ENCODE measurements at regions of chr2 and their contacts with region 1.

Region 1: GRCh38 chr2:44535376-44535775 is 173.6 kb downstream of the CAMKMT start:
- DNase-seq: no peak
- H3K4me3 Mint-ChIP-seq: no peak overlapping the region
- H3K27ac Mint-ChIP-seq: no peak overlapping the region
- H3K4me1 Mint-ChIP-seq: peaks cover 2% of the 10 kb centered on the region
- H3K27me3 Mint-ChIP-seq: no peaks in the 10 kb centered on the region

Region 2: GRCh38 chr2:44362207-44363015 is 173.0 kb before region 1 on chr2:
- CTCF ChIA-PET with region 1: no interaction called
- intact Hi-C with region 1: no loop called
- DNase-seq: peak; percentile 46
- H3K4me3 Mint-ChIP-seq: peak overlapping the region; percentile 97
- H3K27ac Mint-ChIP-seq: peak overlapping the region; percentile 99
- H3K4me1 Mint-ChIP-seq: peaks cover 41% of the 10 kb centered on the region
- H3K27me3 Mint-ChIP-seq: no peaks in the 10 kb centered on the region

Region 3: DNA sequence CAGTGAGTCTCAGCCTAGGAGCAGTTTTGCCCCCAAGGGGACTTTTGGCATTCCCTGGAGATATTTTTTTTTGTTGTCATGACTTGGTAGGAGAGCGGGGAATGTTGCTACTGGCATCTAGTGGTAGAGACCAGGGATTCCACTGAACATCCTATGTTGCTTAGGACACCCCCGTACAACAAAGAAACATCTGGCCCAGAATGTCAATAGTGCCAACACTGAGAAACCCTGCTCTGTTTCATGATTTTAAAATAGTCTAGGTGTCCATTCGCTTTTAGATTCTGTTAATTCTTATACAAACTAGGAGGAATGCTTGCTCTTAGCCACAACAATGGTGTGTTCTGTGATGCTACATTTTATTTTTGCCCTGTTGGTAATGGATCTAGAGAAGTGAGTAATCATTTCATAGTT is 180.3 kb after region 1 on chr2:
- CTCF ChIA-PET with region 1: interaction called, 10 read pairs
- intact Hi-C with region 1: no loop called
- DNase-seq: no peak
- H3K4me3 Mint-ChIP-seq: no peak overlapping the region
- H3K27ac Mint-ChIP-seq: no peak overlapping the region
- H3K4me1 Mint-ChIP-seq: no peaks in the 10 kb centered on the region
- H3K27me3 Mint-ChIP-seq: no peaks in the 10 kb centered on the region

Region 4: DNA sequence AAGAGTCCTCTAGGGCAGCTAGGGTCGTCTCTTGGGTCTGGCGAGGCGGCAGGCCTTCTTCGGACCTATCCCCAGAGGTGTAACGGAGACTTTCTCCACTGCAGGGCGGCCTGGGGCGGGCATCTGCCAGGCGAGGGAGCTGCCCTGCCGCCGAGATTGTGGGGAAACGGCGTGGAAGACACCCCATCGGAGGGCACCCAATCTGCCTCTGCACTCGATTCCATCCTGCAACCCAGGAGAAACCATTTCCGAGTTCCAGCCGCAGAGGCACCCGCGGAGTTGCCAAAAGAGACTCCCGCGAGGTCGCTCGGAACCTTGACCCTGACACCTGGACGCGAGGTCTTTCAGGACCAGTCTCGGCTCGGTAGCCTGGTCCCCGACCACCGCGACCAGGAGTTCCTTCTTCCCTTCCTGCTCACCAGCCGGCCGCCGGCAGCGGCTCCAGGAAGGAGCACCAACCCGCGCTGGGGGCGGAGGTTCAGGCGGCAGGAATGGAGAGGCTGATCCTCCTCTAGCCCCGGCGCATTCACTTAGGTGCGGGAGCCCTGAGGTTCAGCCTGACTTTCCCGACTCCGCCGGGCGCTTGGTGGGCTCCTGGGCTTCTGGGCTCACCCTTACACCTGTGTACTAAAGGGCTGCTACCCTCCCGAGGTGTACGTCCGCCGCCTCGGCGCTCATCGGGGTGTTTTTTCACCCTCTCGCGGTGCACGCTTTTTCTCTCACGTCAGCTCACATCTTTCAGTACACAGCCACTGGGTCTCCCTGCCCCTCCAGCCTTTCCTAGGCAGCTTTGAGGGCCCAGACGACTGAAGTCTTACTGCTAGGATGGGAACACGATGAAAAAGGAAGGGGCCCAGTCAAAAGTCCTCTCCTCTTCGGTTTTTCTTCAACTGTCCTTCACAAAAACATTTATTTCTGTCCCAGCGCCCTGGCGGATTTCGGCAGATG is 465.8 kb after region 1 on chr2:
- CTCF ChIA-PET with region 1: no interaction called
- intact Hi-C with region 1: no loop called
- DNase-seq: no peak
- H3K4me3 Mint-ChIP-seq: peak overlapping the region; percentile 55
- H3K27ac Mint-ChIP-seq: no peak overlapping the region
- H3K4me1 Mint-ChIP-seq: peaks cover 22% of the 10 kb centered on the region
- H3K27me3 Mint-ChIP-seq: peaks cover 78% of the 10 kb centered on the region

Measured in activated naive CD4-positive, alpha-beta T cell treated with anti-CD3 and anti-CD28 coated beads for 36 hours (primary cell).